PC-3 (cell line): ENCODE measurements at regions of chr10 and their contacts with region 1.

Region 1: DNA sequence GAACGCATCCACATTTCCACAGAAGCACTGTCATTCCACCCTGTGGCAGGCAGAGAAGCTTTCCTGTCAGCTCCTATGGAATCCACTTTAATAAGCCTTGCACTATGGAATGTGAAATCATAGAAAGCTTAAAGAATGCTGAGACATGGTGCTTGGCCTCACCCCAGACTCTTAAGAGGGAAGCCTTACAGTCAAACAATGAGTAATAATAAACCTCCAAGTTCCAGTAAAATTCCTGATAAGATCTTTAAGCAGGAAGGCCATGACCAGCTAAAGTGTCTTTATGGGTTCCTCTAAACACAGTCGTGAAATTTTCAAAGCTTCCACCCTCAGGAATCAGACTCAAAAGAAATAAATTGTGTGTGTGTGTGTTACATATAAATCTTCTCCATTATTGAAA is 11.9 kb upstream of the TEX36 start:
- DNase-seq: peak; percentile 88
- ATAC-seq: peak; percentile 73
- H3K4me3 ChIP-seq: 0 out of 2 replicates have a peak overlapping the region, but pooled peaks have one; percentile 16
- H3K27ac ChIP-seq: peak overlapping the region; percentile 42
- H3K4me1 ChIP-seq: peaks cover 41% of the 10 kb centered on the region
- H3K27me3 ChIP-seq: no peaks in the 10 kb centered on the region
- CTCF ChIP-seq: no peak

Region 2: DNA sequence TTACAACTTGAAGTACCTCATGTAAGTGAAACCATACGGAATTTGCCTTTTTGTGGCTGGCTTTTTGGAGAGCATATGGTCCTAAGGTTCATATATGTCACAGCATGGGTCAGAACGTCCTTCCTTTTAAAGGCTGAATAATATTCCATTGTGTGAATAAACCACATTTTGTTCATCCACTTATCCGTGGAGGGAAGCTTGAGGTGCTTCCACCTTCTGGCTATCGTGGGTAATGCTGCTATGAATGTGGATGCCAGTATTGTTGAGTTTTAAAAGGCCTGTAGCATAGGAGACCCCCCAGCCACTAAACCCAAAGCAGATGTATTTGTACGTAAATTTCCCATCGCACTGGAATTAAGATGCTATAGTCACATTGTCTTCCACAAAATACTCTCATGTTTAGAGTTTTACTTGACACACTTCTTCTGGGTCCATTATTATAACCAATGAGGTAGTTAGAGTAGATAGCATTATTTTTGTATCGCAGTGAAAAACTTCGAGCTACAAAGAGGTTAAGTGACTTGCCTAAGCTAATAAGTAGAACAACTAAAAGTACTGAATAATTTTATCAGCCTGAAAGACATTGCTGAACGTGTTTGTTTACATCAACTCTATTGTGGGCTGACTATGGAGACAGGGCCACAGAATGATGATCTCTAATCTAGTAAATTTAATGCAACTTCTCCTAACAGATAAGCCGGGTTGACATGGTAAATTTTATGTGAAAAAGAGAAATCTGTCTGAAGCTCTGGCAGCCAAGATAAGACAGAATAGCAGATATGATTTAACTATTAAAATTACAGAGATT is 351.6 kb before region 1 on chr10:
- CTCF ChIA-PET with region 1: no interaction called
- POLR2A ChIA-PET with region 1: no interaction called
- intact Hi-C with region 1: loop called (anchors 10 kb)
- DNase-seq: peak; percentile 55
- ATAC-seq: no peak
- H3K4me3 ChIP-seq: no peak overlapping the region
- H3K27ac ChIP-seq: no peak overlapping the region
- H3K4me1 ChIP-seq: peaks cover 5% of the 10 kb centered on the region; the same call in 1 of the 2 replicates
- H3K27me3 ChIP-seq: no peaks in the 10 kb centered on the region
- CTCF ChIP-seq: peak; percentile 64

Region 3: DNA sequence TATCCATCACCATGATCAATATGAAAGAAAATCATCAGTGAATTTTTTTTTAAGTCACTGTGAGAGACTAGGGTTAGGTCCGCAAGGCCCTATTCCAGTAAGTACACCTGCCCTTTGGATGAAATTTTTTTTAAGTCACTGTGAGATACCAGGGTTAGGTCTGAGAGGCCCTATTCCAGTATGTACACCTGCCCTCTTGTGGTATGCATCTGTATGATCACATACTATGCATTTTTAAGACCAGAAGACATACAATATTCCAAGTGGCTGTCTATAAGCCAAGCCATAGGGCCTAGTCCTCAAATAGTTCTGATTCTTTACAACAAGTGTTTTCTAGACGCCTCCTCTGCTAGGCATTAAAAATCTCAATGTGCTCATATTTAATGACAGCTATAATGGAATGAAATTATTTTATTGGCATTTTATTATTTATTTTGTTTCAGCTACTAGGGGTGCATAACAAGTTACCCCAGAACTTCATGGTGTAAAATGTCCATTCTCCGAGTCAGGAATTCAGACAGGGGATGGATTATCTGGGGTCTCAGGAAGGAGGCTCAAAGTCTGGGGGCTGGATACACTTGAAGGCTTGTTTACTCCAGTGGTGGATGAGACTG is 65.0 kb before region 1 on chr10:
- CTCF ChIA-PET with region 1: interaction called, 3 read pairs
- POLR2A ChIA-PET with region 1: no interaction called
- intact Hi-C with region 1: loop called (anchors 2 kb)
- DNase-seq: peak; percentile 68
- ATAC-seq: peak; percentile 74
- H3K4me3 ChIP-seq: no peak overlapping the region
- H3K27ac ChIP-seq: no peak overlapping the region
- H3K4me1 ChIP-seq: peaks cover 14% of the 10 kb centered on the region
- H3K27me3 ChIP-seq: peaks cover 23% of the 10 kb centered on the region
- CTCF ChIP-seq: peak; percentile 72

Region 4: GRCh38 chr10:125656523-125656922 is 38.4 kb before region 1 on chr10:
- CTCF ChIA-PET with region 1: no interaction called
- POLR2A ChIA-PET with region 1: no interaction called
- intact Hi-C with region 1: loop called (anchors 2 kb)
- DNase-seq: no peak
- ATAC-seq: no peak
- H3K4me3 ChIP-seq: no peak overlapping the region
- H3K27ac ChIP-seq: no peak overlapping the region
- H3K4me1 ChIP-seq: peaks cover 3% of the 10 kb centered on the region
- H3K27me3 ChIP-seq: no peaks in the 10 kb centered on the region
- CTCF ChIP-seq: no peak

Region 5: GRCh38 chr10:125707541-125708468 is 12.9 kb after region 1 on chr10:
- CTCF ChIA-PET with region 1: no interaction called
- POLR2A ChIA-PET with region 1: no interaction called
- intact Hi-C with region 1: loop called (anchors 2 kb)
- DNase-seq: peak; percentile 80
- ATAC-seq: peak; percentile 98
- H3K4me3 ChIP-seq: no peak overlapping the region
- H3K27ac ChIP-seq: no peak overlapping the region
- H3K4me1 ChIP-seq: peaks cover 15% of the 10 kb centered on the region
- H3K27me3 ChIP-seq: no peaks in the 10 kb centered on the region
- CTCF ChIP-seq: no peak

Region 6: GRCh38 chr10:125719146-125720001 is 24.5 kb after region 1 on chr10 and contains the start of gene EDRF1:
- CTCF ChIA-PET with region 1: no interaction called
- POLR2A ChIA-PET with region 1: no interaction called
- intact Hi-C with region 1: no loop called
- DNase-seq: peak; percentile 97
- ATAC-seq: peak; percentile 95
- H3K4me3 ChIP-seq: peak within 1 kb of the TSS; percentile 94
- H3K27ac ChIP-seq: peak within 1 kb of the TSS; percentile 52
- H3K4me1 ChIP-seq: peaks cover 15% of the 10 kb centered on the region
- H3K27me3 ChIP-seq: no peaks in the 10 kb centered on the region
- CTCF ChIP-seq: no peak
- total RNA-seq, gene EDRF1: 16.0 and 17.7 TPM in 2 replicates

Region 7: DNA sequence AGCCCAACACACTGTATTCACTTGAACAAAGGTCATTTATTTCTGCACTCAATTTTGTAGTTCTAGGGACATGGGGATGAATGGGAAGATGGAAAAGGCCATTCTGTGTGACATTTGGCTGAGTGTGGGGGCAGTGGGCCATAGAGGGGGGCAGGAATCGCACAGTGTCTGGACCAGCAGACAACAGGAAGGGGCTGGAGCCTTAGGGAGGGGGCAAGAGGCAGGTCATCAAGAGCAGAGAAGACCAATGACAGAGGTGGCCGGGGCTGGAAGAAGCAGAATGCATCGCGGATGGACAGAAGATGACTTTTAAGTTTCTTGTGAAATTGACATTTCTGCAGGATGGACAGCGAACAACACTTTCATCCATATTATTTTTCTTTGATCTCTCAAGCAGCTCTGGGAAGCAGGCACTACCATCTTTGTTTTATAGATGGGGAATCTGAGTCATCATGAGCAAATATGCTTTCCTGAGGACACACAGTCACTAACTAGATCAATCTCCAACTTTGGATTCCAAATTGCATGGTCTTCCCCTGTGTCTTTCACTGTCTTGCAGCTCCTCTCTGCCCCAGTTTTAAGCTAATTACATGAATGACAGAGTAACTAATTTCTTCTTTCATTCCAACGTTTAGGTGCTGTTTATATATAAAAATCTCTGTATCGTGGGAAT is 491.8 kb after region 1 on chr10:
- CTCF ChIA-PET with region 1: no interaction called
- POLR2A ChIA-PET with region 1: no interaction called
- intact Hi-C with region 1: no loop called
- DNase-seq: peak; percentile 56
- ATAC-seq: peak; percentile 82
- H3K4me3 ChIP-seq: no peak overlapping the region
- H3K27ac ChIP-seq: peak overlapping the region; percentile 40; the same call in 1 of the 2 replicates
- H3K4me1 ChIP-seq: peaks cover 12% of the 10 kb centered on the region
- H3K27me3 ChIP-seq: no peaks in the 10 kb centered on the region
- CTCF ChIP-seq: no peak